ENCODE measurements at regions of chr17 and their contacts with region 1.

Region 1: GRCh38 chr17:2683912-2684311 is 27.7 kb downstream of the CLUH start:
- DNase-seq: no peak
- H3K4me3 ChIP-seq: no peak overlapping the region
- H3K27ac ChIP-seq: no peak overlapping the region
- H3K4me1 ChIP-seq: no peaks in the 10 kb centered on the region
- H3K27me3 ChIP-seq: no peaks in the 10 kb centered on the region
- CTCF ChIP-seq: no peak

Region 2: DNA sequence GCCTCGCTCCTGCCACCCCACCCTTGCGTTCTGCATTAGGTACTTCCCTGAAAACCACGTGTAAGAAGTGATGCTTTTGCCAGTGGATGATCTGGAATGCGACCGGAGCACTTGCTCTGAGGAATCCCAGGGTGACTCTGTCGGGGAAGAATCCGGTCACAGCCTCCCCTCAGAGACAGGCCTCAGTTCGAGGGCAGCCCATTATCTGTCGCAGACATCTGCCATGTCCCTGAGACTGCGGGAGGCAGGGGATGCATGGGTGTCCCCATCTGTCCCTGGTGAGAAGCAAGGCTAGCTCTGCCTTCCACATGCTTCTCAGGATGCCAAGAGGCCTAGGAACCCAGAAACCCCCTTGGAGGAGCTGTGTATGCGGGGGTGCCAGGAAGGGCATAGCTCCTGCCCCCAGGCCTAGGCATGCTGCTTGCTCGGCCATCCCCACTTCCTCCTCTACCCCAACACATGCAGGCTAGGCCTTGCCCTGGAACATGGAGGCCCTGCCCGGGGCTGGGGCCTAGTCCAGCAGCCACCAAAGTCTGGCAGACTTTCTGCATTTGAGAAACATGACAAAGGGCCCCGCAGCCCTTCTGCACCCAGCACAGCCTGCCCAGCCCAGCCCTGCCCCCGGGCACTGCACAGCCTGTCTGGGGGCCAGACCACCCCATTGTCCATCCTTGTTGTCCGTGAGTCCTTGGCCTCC is 303.5 kb before region 1 on chr17:
- CTCF ChIA-PET with region 1: no interaction called
- dilution Hi-C with region 1: no loop called
- in situ Hi-C with region 1: no loop called
- intact Hi-C with region 1: loop called (anchors 5 kb)
- DNase-seq: no peak
- H3K4me3 ChIP-seq: no peak overlapping the region
- H3K27ac ChIP-seq: no peak overlapping the region
- H3K4me1 ChIP-seq: peaks cover 14% of the 10 kb centered on the region
- H3K27me3 ChIP-seq: no peaks in the 10 kb centered on the region
- CTCF ChIP-seq: no peak

Region 3: GRCh38 chr17:2749784-2750181 is 65.9 kb after region 1 on chr17:
- CTCF ChIA-PET with region 1: no interaction called
- dilution Hi-C with region 1: no loop called
- in situ Hi-C with region 1: no loop called
- intact Hi-C with region 1: no loop called
- DNase-seq: peak; percentile 67
- H3K4me3 ChIP-seq: no peak overlapping the region
- H3K27ac ChIP-seq: no peak overlapping the region
- H3K4me1 ChIP-seq: peaks cover 3% of the 10 kb centered on the region
- H3K27me3 ChIP-seq: peaks cover 4% of the 10 kb centered on the region
- CTCF ChIP-seq: no peak